HCT116 (cell line): ENCODE measurements at regions of chr16 and their contacts with region 1.

Region 1: GRCh38 chr16:11255737-11256660 is at the start of gene SOCS1:
- DNase-seq: peak; percentile 47
- ATAC-seq: peak; percentile 79
- H3K4me3 ChIP-seq: peak within 1 kb of the TSS; percentile 70 to 79
- H3K27ac ChIP-seq: peak within 1 kb of the TSS; percentile 85
- H3K4me1 ChIP-seq: peaks cover 8 to 31% of the 10 kb centered on the region in 2 experiments; a peak in 3 of 4 replicates
- H3K27me3 ChIP-seq: no peaks in the 10 kb centered on the region
- CTCF ChIP-seq: peak; percentile 75 to 82 (median 77)
- POLR2A ChIP-seq: peak; percentile 92
- RAD21 ChIP-seq: peak; percentile 90
- total RNA-seq, gene SOCS1: 4.9 TPM

Region 2: DNA sequence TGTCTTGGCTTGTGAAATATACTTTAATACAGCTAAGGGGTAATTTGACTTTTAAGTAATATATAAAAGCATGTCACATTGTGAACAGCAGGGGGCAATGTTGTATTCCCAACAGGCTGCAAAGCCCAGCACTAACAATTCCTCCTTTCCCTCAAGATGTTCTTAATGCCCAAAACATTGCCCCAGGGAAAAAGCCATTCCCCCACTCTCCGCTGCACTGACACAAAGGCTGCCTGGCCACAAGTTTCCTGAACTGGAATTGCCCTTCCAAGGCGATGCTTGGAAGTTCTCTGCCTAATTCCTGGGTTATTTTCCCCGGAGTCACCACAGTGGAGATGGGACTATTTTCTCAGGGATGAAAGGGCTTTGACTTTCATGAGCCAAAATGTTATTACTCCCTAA is 284.4 kb before region 1 on chr16:
- CTCF ChIA-PET with region 1: interaction called, 55 read pairs
- POLR2A ChIA-PET with region 1: interaction called, 30 read pairs
- RAD21 ChIA-PET with region 1: interaction called, 16 to 19 read pairs
- intact Hi-C with region 1: loop called (anchors 1 kb)
- DNase-seq: peak; percentile 47
- ATAC-seq: peak; percentile 74
- H3K4me3 ChIP-seq: no peak overlapping the region
- H3K27ac ChIP-seq: no peak overlapping the region
- H3K4me1 ChIP-seq: no peaks in the 10 kb centered on the region; a peak in 1 of 4 replicates
- H3K27me3 ChIP-seq: no peaks in the 10 kb centered on the region
- CTCF ChIP-seq: peak; percentile 66 to 89 (median 84)
- POLR2A ChIP-seq: no peak
- RAD21 ChIP-seq: peak; percentile 98

Region 3: DNA sequence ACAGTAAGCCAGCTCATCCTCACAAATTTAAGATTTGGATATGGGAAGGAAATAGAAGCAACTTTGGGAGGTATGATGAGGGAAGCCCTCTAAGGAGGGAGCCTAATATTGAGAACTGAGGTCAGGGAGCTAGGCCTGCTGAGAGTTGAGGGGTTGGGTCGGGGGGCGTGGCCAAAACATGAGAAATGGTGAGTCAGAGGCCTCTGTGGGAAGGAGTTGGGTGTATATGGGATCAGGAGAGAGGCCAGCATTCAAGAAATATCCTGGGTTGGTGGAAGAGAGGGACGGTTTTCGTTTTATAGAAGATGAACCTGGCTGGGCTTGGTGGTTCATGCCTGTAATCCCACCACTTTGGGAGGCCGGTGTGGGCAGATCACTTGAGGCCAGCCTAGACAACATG is 263.2 kb before region 1 on chr16:
- CTCF ChIA-PET with region 1: interaction called, 4 read pairs
- POLR2A ChIA-PET with region 1: interaction called, 19 read pairs
- RAD21 ChIA-PET with region 1: interaction called in 1 of 2 experiments, 4 read pairs
- intact Hi-C with region 1: no loop called
- DNase-seq: peak; percentile 52
- ATAC-seq: peak; percentile 70
- H3K4me3 ChIP-seq: peak overlapping the region; percentile 29 to 51
- H3K27ac ChIP-seq: peak overlapping the region; percentile 94
- H3K4me1 ChIP-seq: peaks cover 50 to 58% of the 10 kb centered on the region in 2 experiments
- H3K27me3 ChIP-seq: no peaks in the 10 kb centered on the region
- CTCF ChIP-seq: no peak
- POLR2A ChIP-seq: no peak
- RAD21 ChIP-seq: no peak

Region 4: DNA sequence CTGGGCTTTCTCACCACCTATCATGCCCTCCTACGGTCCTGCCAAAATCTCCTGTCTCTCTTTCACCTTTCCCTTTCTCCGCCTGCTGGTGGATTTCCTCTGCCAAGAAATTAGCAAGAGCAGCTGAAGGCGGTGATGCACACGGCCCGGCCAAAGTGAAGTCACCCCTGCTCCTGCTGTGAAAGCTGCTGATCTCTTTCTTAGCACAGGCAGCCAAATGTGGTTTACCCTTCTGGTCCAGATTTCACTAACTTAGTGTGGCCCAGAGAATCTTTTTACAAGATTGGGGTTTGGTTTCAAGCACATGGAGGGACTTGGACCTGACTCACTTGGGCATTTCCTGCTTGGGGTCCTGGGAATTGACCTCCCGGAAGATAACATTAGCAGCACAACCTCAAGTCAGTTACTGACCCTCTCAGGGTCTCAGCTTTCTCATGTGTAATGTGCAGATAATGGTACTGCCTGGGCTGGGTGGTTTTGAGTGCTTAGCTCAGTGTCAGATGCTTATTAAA is 155.7 kb before region 1 on chr16:
- CTCF ChIA-PET with region 1: no interaction called
- POLR2A ChIA-PET with region 1: interaction called, 3 read pairs
- RAD21 ChIA-PET with region 1: interaction called in 1 of 2 experiments, 3 read pairs
- intact Hi-C with region 1: loop called (anchors 2 kb)
- DNase-seq: peak; percentile 23
- ATAC-seq: peak; percentile 77
- H3K4me3 ChIP-seq: no peak overlapping the region
- H3K27ac ChIP-seq: 0 out of 2 replicates have a peak overlapping the region, but pooled peaks have one; percentile 3
- H3K4me1 ChIP-seq: peaks cover 20 to 22% of the 10 kb centered on the region in 2 experiments
- H3K27me3 ChIP-seq: no peaks in the 10 kb centered on the region
- CTCF ChIP-seq: peak in 2 of 3 experiments; percentile 6 to 27; a peak in 1 of 6 replicates
- POLR2A ChIP-seq: no peak
- RAD21 ChIP-seq: peak; percentile 32; the same call in 1 of the 2 replicates

Region 5: GRCh38 chr16:11356573-11357331 is 100.8 kb after region 1 on chr16:
- CTCF ChIA-PET with region 1: interaction called, 11 read pairs
- POLR2A ChIA-PET with region 1: interaction called, 22 read pairs
- RAD21 ChIA-PET with region 1: interaction called, 5 to 6 read pairs
- intact Hi-C with region 1: loop called (anchors 2 kb)
- DNase-seq: no peak
- ATAC-seq: peak; percentile 72
- H3K4me3 ChIP-seq: peak overlapping the region in 1 of 2 experiments; percentile 37; a peak in 2 of 4 replicates
- H3K27ac ChIP-seq: peak overlapping the region; percentile 59
- H3K4me1 ChIP-seq: peaks cover 34 to 46% of the 10 kb centered on the region in 2 experiments
- H3K27me3 ChIP-seq: no peaks in the 10 kb centered on the region
- CTCF ChIP-seq: peak; percentile 57 to 73 (median 68); a peak in 5 of 6 replicates
- POLR2A ChIP-seq: no peak
- RAD21 ChIP-seq: peak; percentile 85

Region 6: GRCh38 chr16:11806721-11807120 is 550.7 kb after region 1 on chr16:
- CTCF ChIA-PET with region 1: no interaction called
- POLR2A ChIA-PET with region 1: no interaction called
- RAD21 ChIA-PET with region 1: no interaction called
- intact Hi-C with region 1: loop called (anchors 5 kb)
- DNase-seq: no peak
- ATAC-seq: no peak
- H3K4me3 ChIP-seq: no peak overlapping the region
- H3K27ac ChIP-seq: no peak overlapping the region
- H3K4me1 ChIP-seq: peaks cover 0 to under 1% of the 10 kb centered on the region in 2 experiments; a peak in 1 of 4 replicates
- H3K27me3 ChIP-seq: no peaks in the 10 kb centered on the region
- CTCF ChIP-seq: no peak
- POLR2A ChIP-seq: no peak
- RAD21 ChIP-seq: no peak